Natural killer cell (primary cell): ENCODE measurements at regions of chr4 and their contacts with region 1.

Region 1: GRCh38 chr4:177339477-177340374 is 30.1 kb downstream of the NEIL3 start:
- DNase-seq: peak in 1 of 2 donors; percentile 66
- ATAC-seq: peak; percentile 77 to 97 (median 90)
- H3K4me3 ChIP-seq: no peak overlapping the region
- H3K4me3 Mint-ChIP-seq: no peak overlapping the region
- H3K27ac ChIP-seq: no peak overlapping the region
- H3K27ac Mint-ChIP-seq: no peak overlapping the region
- H3K4me1 ChIP-seq: no peaks in the 10 kb centered on the region
- H3K4me1 Mint-ChIP-seq: peaks cover 5 to 10% of the 10 kb centered on the region in 2 donors
- H3K27me3 ChIP-seq: no peaks in the 10 kb centered on the region
- H3K27me3 Mint-ChIP-seq: no peaks in the 10 kb centered on the region
- CTCF ChIP-seq: peak; percentile 68

Region 2: DNA sequence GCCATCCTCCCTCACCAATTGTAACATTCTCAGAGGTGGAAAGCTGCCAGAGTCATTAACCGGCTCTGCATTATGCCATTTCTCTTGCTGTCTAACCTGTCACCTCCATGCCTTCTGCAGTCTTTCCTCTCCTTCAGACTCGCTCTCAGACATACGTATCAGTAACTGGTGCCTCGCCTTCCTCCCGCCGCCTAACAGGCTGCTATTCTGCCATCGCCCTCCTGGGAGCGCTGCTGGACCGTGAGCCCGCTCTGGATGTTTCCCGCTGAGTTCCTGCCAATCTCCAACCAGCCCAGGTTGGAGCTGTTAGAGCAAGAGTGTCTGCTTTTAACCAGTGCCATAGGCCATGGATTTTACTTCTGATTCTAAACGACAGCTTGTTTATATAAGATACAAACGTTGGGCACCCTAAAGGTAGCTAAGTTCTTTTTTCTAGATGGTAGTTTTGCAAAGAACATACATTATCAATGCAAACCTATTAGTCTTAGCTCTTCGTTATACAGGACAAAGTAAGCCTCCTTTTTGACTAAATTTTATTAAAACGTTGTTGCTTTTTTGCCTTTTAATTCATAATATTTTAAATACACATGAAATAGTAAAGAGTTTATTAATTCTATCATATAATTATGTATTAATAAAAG is 89.5 kb before region 1 on chr4:
- intact Hi-C with region 1: loop called (anchors 1 kb)
- DNase-seq: peak; percentile 40 to 82
- ATAC-seq: peak; percentile 83 to 93 (median 83)
- H3K4me3 ChIP-seq: no peak overlapping the region
- H3K4me3 Mint-ChIP-seq: no peak overlapping the region
- H3K27ac ChIP-seq: no peak overlapping the region
- H3K27ac Mint-ChIP-seq: no peak overlapping the region
- H3K4me1 ChIP-seq: no peaks in the 10 kb centered on the region
- H3K4me1 Mint-ChIP-seq: peaks cover 5 to 7% of the 10 kb centered on the region in 2 donors
- H3K27me3 ChIP-seq: no peaks in the 10 kb centered on the region
- H3K27me3 Mint-ChIP-seq: peaks cover 6 to 8% of the 10 kb centered on the region in 2 donors
- CTCF ChIP-seq: peak; percentile 80

Region 3: GRCh38 chr4:177380730-177381287 is 41.1 kb after region 1 on chr4:
- intact Hi-C with region 1: no loop called
- DNase-seq: no peak
- ATAC-seq: no peak
- H3K4me3 ChIP-seq: no peak overlapping the region
- H3K4me3 Mint-ChIP-seq: no peak overlapping the region
- H3K27ac ChIP-seq: no peak overlapping the region
- H3K27ac Mint-ChIP-seq: no peak overlapping the region
- H3K4me1 ChIP-seq: no peaks in the 10 kb centered on the region
- H3K4me1 Mint-ChIP-seq: no peaks in the 10 kb centered on the region
- H3K27me3 ChIP-seq: no peaks in the 10 kb centered on the region
- H3K27me3 Mint-ChIP-seq: peaks cover 3 to 39% of the 10 kb centered on the region in 2 donors
- CTCF ChIP-seq: no peak